ENCODE measurements at regions of chr9 and their contacts with region 1.

Region 1: DNA sequence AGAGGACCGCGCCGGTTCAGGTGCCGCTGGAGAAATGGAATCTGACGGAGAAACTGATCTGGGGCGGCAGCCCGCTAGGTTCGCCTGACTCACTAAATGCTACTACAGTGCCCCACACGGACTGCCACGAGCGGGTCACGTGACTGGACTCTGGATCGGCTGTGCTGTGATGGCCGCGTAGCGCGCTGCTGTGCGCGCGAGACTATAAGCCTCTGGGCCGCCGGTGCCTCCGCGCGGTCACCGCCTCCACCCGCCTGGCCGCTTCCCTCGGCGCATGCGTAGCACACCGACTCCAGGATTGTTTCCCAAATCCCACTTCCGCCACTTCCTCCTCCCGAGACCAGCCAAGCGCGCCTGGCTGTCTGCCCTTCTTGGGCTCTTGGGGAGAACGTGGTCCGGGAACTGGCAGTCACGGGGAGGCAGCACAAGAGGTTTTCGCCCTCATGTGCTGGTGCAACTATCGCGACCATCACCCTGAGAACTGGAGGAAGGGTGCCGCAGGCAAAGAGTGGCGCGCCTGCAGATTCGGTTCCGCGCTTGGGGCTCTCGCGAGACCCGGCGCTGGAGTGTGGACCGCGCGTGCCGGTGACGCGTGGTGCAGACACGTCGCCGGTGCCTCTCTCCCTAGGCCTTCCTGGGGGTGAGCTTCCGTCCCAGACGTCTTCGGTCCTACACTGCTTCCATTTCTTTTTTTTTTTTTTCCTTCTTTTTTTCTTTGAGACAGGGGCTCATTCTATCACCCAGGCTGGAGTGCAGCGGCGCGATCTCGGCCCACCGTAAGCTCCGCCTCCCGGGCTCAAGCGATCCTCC is 35.8 kb upstream of the GLDC start:
- DNase-seq: peak; percentile 96
- ATAC-seq: peak; percentile 94
- H3K4me3 ChIP-seq: peak overlapping the region; percentile 74 to 86 (median 77)
- H3K27ac ChIP-seq: peak overlapping the region; percentile 98
- H3K4me1 ChIP-seq: peaks cover 69% of the 10 kb centered on the region
- H3K27me3 ChIP-seq: no peaks in the 10 kb centered on the region
- CTCF ChIP-seq: peak; percentile 45
- EP300 ChIP-seq: peak; percentile 9 to 54; a peak in 1 of 4 replicates
- POLR2A ChIP-seq: peak; percentile 83 to 97
- RAD21 ChIP-seq: peak; percentile 33; the same call in 1 of the 2 replicates

Region 2: DNA sequence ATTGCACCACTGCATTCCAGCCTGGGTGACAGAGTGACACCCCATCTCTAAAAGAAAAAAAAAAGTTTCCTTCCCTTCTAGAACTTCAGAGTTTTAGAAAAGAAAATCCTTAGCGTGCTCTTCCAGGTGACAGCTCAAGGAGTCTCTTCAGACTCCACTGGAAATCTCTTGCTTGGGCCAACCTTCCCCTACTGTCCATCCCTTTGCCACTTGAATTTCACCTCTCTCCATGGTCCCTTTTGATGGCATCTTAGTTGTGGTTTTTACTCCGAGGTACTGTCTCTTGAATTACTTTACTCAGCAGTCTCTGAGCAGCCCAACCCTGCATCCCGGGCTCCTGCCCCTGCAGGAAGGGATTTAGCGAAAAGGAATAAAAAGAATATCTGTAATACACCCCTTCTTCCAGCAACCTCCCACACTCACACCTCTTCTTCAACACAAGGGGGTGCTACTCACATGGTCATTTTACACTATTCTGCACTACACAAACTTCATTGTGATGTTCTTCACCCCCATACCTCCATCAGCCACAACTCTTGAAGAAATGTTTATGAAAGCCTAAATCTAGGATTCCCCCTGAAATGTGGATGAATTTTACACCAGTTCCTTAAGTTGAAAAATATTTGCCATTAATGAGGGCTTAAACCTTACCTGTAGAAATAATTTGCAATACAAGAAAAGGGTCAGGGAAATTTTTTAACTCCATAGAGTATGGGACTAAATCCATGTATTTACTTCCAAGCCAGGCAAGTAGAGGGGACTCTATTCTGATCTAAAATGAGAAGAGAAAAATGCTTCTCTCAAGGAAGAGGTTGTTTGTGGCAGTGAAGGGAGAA is 327.3 kb before region 1 on chr9:
- CTCF ChIA-PET with region 1: no interaction called
- POLR2A ChIA-PET with region 1: no interaction called
- in situ Hi-C with region 1: loop called (anchors 25 kb)
- intact Hi-C with region 1: no loop called
- DNase-seq: peak; percentile 61
- ATAC-seq: peak; percentile 97
- H3K4me3 ChIP-seq: no peak overlapping the region
- H3K27ac ChIP-seq: no peak overlapping the region
- H3K4me1 ChIP-seq: no peaks in the 10 kb centered on the region
- H3K27me3 ChIP-seq: peaks cover 1 to 4% of the 10 kb centered on the region in 2 experiments; a peak in 1 of 5 replicates
- CTCF ChIP-seq: peak; percentile 79
- EP300 ChIP-seq: no peak
- POLR2A ChIP-seq: no peak
- RAD21 ChIP-seq: peak; percentile 46; the same call in 1 of the 2 replicates

Region 3: GRCh38 chr9:6590334-6590733 is 91.0 kb before region 1 on chr9:
- CTCF ChIA-PET with region 1: no interaction called
- POLR2A ChIA-PET with region 1: interaction called, 32 read pairs
- in situ Hi-C with region 1: loop called (anchors 5 kb)
- intact Hi-C with region 1: loop called (anchors 1 kb)
- DNase-seq: no peak
- ATAC-seq: no peak; the same call in 2 of the 3 replicates
- H3K4me3 ChIP-seq: no peak overlapping the region; a peak in 1 of 6 replicates
- H3K27ac ChIP-seq: peak overlapping the region; percentile 83
- H3K4me1 ChIP-seq: peaks cover 41% of the 10 kb centered on the region
- H3K27me3 ChIP-seq: no peaks in the 10 kb centered on the region
- CTCF ChIP-seq: no peak
- EP300 ChIP-seq: no peak
- POLR2A ChIP-seq: no peak
- RAD21 ChIP-seq: no peak

Region 4: GRCh38 chr9:6645355-6646292 is 35.7 kb before region 1 on chr9 and contains the start of gene GLDC:
- CTCF ChIA-PET with region 1: no interaction called
- POLR2A ChIA-PET with region 1: interaction called, 13 read pairs
- in situ Hi-C with region 1: no loop called
- intact Hi-C with region 1: loop called (anchors 1 kb)
- DNase-seq: peak; percentile 90
- ATAC-seq: peak; percentile 95
- H3K4me3 ChIP-seq: peak within 1 kb of the TSS; percentile 76 to 96 (median 81)
- H3K27ac ChIP-seq: peak within 1 kb of the TSS; percentile 72
- H3K4me1 ChIP-seq: peaks cover 61% of the 10 kb centered on the region
- H3K27me3 ChIP-seq: no peaks in the 10 kb centered on the region; a peak in 1 of 5 replicates
- CTCF ChIP-seq: peak; percentile 33
- EP300 ChIP-seq: no peak
- POLR2A ChIP-seq: peak; percentile 80 to 87
- RAD21 ChIP-seq: no peak
- total RNA-seq, gene GLDC: 51.0 and 115 TPM in 2 replicates

Region 5: GRCh38 chr9:6703898-6704639 is 22.7 kb after region 1 on chr9:
- CTCF ChIA-PET with region 1: no interaction called
- POLR2A ChIA-PET with region 1: interaction called, 17 read pairs
- in situ Hi-C with region 1: no loop called
- intact Hi-C with region 1: no loop called
- DNase-seq: peak; percentile 68
- ATAC-seq: peak; percentile 88
- H3K4me3 ChIP-seq: peak overlapping the region; percentile 42 to 68 (median 59); a peak in 5 of 6 replicates
- H3K27ac ChIP-seq: peak overlapping the region; percentile 58
- H3K4me1 ChIP-seq: peaks cover 29% of the 10 kb centered on the region
- H3K27me3 ChIP-seq: no peaks in the 10 kb centered on the region
- CTCF ChIP-seq: no peak
- EP300 ChIP-seq: no peak
- POLR2A ChIP-seq: peak; percentile 45 to 74; a peak in 3 of 4 replicates
- RAD21 ChIP-seq: no peak

Region 6: DNA sequence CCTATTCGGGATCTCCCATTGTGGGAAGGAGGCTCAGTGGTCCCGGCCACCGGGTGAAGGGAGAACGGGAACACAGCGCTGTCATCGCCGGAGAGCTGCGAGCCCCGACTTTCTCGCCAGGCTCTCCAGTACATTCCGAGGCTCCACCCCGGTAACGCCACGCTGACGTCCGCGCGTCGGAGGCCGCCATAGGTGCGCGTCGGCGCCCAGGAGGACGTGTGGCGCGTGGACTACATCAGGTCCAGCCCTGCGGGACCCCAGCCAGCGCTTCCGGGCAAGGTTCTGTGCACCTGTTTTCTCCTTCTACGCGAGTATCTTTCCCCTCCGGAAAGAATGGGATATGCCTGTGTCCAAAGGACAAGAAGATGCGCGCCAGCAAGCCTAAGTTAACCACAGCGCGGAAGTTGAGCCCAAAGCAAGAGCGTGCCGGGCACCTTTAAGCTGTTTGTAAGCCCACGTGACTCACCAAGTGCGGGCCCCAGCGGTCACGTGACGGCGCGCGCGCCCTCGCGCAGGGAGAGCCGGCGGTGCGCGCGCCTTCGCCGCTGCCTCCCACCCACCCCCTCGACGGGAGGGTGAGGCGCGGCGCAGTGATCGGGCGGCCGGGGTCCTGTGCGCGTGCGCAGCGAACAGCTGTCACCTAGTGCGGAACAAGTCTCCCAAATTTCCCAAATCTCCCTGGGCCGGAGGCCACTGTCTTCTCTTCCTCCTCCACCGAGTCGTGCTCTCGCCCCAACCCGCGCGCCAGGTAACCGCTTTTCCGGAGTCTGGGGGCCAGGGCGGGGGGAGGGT is 76.3 kb after region 1 on chr9 and contains the start of gene KDM4C:
- CTCF ChIA-PET with region 1: no interaction called
- POLR2A ChIA-PET with region 1: interaction called, 24 read pairs
- in situ Hi-C with region 1: no loop called
- intact Hi-C with region 1: loop called (anchors 5 kb)
- DNase-seq: peak; percentile 90
- ATAC-seq: peak; percentile 90
- H3K4me3 ChIP-seq: peak within 1 kb of the TSS; percentile 87 to 95 (median 88)
- H3K27ac ChIP-seq: peak within 1 kb of the TSS; percentile 96
- H3K4me1 ChIP-seq: peaks cover 32% of the 10 kb centered on the region
- H3K27me3 ChIP-seq: no peaks in the 10 kb centered on the region; a peak in 1 of 5 replicates
- CTCF ChIP-seq: no peak
- EP300 ChIP-seq: peak; percentile 3 to 5; a peak in 1 of 4 replicates
- POLR2A ChIP-seq: peak; percentile 96 to 98
- RAD21 ChIP-seq: peak; percentile 28
- total RNA-seq, gene KDM4C: 22.1 and 23.6 TPM in 2 replicates